Left cardiac atrium (tissue), 4 donors: ENCODE measurements at regions of chr12 and their contacts with region 1.

Region 1: GRCh38 chr12:98644711-98645402 is at the starts of genes APAF1 and IKBIP:
- DNase-seq: peak; percentile 98
- ATAC-seq: peak; percentile 98 to 99
- total RNA-seq, gene APAF1: 6.2 to 7.8 TPM
- total RNA-seq, gene IKBIP: 9.2 to 12.1 TPM

Region 2: DNA sequence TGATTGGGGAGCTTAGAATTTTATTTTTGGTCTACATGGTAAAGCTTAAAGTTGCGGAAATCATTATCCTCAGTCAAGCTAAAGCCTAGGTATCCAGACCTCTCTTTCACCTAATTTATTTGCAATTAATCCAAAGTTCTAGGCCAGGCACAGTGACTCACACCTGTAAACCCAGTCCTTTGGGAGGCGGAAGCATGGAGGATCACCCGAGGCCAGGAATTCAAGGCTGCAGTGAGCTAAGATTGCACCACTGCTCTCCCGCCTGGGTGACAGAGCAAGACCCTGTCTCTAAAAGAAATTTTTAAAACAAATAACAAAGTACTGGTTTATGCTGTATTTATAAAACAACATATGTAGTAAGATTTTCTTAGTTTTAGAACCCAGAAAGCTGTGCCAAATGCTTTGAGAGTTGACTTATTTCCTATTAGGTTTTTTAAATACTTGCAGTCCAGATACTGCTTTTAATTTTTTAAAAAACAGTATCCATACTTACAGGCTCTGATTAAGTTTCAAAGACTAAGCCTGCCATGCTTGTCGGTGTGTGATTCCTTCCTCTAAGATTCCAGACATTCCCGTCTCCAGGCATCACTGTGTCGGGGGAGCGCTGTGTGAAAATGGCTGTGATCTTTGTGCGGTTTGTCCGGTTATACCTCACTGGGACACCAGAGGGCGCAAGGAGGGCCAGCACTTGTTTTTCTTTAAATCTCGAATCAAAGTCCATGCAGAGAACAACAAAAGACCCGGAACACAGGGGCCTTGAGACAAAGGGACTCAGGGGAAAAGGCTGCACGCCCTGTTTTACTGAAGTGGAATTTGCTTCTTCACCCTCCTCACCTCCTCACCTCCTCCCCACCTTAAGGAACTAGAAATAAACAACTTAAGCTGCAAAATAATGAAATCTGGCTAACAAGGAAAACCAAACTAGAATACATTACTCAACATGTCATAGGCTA is 154.1 kb before region 1 on chr12:
- intact Hi-C with region 1: loop called in 1 of 2 experiments (anchors 5 kb)
- DNase-seq: peak; percentile 85
- ATAC-seq: peak; percentile 89 to 93

Region 3: DNA sequence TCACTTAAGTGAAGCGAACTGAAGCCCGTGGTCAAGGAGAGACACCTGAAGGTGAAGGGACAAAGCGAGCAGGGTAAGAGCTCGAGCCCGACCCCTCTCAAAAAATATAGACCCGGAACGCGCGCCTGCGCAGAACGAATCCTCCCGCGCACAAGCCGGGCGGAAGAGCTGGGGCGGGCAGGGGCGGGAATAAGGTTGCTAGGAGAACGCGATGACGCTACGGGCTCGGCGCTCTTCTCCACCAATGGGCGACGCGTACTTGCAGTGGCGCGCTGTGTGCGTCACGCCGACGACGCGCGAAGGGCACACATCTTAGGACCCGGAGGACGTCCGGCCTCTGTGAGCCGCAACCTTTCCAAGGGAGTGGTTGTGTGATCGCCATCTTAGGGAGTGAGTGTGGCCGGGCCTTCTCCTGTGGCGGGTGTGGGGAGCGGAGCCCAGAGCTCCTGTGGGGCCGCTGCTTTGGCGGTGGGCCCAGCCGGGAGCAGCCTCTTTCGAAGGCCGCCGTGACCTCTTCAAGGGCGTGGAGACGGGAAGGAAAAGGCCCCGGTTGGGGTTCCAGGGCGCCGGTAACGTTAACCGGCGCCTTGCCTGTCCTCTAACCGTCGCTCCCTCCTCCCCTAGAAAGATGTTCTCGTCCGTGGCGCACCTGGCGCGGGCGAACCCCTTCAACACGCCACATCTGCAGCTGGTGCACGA is 51.4 kb before region 1 on chr12 and contains the start of gene SLC25A3:
- intact Hi-C with region 1: loop called in 1 of 2 experiments (anchors 5 kb)
- DNase-seq: peak; percentile 98
- ATAC-seq: peak; percentile 99
- total RNA-seq, gene SLC25A3: 988 to 1,201 TPM